ENCODE measurements at regions of chr14 and their contacts with region 1.

Region 1: DNA sequence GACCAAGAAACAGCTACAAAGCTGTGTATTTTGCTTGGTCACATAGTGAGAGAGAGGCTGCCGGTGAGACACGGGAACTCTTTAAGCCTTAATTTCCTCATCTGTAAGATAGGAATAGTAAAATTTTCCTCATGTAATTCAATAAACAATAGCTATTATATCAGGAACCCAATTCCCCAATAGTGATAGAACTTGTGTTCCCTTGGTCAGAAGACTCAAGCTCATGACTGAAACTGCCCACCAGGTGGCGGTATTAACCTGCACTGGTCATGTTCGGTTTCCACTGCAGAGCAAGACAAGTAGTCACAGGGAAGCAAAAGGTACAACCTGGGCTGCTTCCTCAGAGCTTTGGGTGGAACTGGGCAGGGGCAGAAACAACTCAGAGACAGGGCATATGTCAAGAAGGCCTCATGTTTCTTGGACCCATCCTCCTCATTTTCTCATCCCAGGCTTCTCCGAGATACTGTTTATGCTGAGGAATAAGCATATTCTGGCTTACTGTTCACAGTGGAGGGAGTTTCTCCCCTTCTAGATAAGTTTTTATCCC is 4.2 kb upstream of the AJUBA start:
- DNase-seq: peak; percentile 87
- H3K4me3 Mint-ChIP-seq: no peak overlapping the region
- H3K27ac Mint-ChIP-seq: no peak overlapping the region
- H3K4me1 Mint-ChIP-seq: peaks cover 6% of the 10 kb centered on the region
- H3K27me3 Mint-ChIP-seq: no peaks in the 10 kb centered on the region
- CTCF ChIP-seq: peak; percentile 75

Region 2: GRCh38 chr14:22519877-22520685 is 466.5 kb before region 1 on chr14:
- CTCF ChIA-PET with region 1: no interaction called
- POLR2A ChIA-PET with region 1: no interaction called
- intact Hi-C with region 1: no loop called
- DNase-seq: peak; percentile 42
- H3K4me3 Mint-ChIP-seq: no peak overlapping the region
- H3K27ac Mint-ChIP-seq: no peak overlapping the region
- H3K4me1 Mint-ChIP-seq: peaks cover 5% of the 10 kb centered on the region
- H3K27me3 Mint-ChIP-seq: no peaks in the 10 kb centered on the region
- CTCF ChIP-seq: no peak

Region 3: DNA sequence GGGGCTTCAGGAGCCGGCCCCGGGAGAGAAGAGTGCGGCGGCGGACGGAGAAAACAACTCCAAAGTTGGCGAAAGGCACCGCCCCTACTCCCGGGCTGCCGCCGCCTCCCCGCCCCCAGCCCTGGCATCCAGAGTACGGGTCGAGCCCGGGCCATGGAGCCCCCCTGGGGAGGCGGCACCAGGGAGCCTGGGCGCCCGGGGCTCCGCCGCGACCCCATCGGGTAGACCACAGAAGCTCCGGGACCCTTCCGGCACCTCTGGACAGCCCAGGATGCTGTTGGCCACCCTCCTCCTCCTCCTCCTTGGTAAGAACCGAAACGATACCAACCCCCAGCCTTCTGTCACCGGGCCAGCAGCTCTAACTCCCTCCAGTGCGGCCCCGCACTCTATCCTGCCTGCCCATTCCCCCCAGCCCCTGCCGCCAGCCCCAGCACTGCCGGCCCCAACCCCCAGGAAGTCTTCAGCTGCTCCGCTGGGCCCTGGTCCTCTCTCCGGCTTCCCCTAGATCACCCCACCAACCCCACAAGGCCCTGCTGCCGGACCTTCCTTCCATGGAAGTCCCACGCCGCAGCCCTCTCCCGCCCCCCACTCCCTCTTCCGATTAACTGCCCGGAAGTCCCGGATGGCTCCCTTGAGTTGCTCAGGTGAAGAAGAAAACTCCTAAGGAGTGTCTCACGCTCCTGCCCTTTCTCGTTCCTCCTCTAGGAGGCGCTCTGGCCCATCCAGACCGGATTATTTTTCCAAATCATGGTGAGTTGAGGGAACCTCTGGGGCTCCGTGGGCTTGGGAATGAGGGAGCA is 114.3 kb before region 1 on chr14:
- CTCF ChIA-PET with region 1: interaction called, 4 read pairs
- POLR2A ChIA-PET with region 1: interaction called, 9 read pairs
- intact Hi-C with region 1: loop called (anchors 2 kb)
- DNase-seq: peak; percentile 90
- H3K4me3 Mint-ChIP-seq: peak overlapping the region; percentile 79
- H3K27ac Mint-ChIP-seq: peak overlapping the region; percentile 91
- H3K4me1 Mint-ChIP-seq: peaks cover 20% of the 10 kb centered on the region
- H3K27me3 Mint-ChIP-seq: no peaks in the 10 kb centered on the region
- CTCF ChIP-seq: peak; percentile 81

Region 4: GRCh38 chr14:22955702-22956569 is 30.6 kb before region 1 on chr14:
- CTCF ChIA-PET with region 1: interaction called, 331 read pairs
- POLR2A ChIA-PET with region 1: interaction called, 38 read pairs
- intact Hi-C with region 1: no loop called
- DNase-seq: peak; percentile 3
- H3K4me3 Mint-ChIP-seq: peak overlapping the region; percentile 90
- H3K27ac Mint-ChIP-seq: peak overlapping the region; percentile 66
- H3K4me1 Mint-ChIP-seq: peaks cover 9% of the 10 kb centered on the region
- H3K27me3 Mint-ChIP-seq: no peaks in the 10 kb centered on the region
- CTCF ChIP-seq: no peak

Region 5: GRCh38 chr14:23034483-23035302 is 48.1 kb after region 1 on chr14 and contains the start of gene PSMB5:
- CTCF ChIA-PET with region 1: interaction called, 13 read pairs
- POLR2A ChIA-PET with region 1: interaction called, 8 read pairs
- intact Hi-C with region 1: no loop called
- DNase-seq: peak; percentile 96
- H3K4me3 Mint-ChIP-seq: peak within 1 kb of the TSS; percentile 92
- H3K27ac Mint-ChIP-seq: peak within 1 kb of the TSS; percentile 99
- H3K4me1 Mint-ChIP-seq: peaks cover 8% of the 10 kb centered on the region
- H3K27me3 Mint-ChIP-seq: no peaks in the 10 kb centered on the region
- CTCF ChIP-seq: no peak
- total RNA-seq, gene PSMB5: 162 and 173 TPM in 2 replicates

Region 6: DNA sequence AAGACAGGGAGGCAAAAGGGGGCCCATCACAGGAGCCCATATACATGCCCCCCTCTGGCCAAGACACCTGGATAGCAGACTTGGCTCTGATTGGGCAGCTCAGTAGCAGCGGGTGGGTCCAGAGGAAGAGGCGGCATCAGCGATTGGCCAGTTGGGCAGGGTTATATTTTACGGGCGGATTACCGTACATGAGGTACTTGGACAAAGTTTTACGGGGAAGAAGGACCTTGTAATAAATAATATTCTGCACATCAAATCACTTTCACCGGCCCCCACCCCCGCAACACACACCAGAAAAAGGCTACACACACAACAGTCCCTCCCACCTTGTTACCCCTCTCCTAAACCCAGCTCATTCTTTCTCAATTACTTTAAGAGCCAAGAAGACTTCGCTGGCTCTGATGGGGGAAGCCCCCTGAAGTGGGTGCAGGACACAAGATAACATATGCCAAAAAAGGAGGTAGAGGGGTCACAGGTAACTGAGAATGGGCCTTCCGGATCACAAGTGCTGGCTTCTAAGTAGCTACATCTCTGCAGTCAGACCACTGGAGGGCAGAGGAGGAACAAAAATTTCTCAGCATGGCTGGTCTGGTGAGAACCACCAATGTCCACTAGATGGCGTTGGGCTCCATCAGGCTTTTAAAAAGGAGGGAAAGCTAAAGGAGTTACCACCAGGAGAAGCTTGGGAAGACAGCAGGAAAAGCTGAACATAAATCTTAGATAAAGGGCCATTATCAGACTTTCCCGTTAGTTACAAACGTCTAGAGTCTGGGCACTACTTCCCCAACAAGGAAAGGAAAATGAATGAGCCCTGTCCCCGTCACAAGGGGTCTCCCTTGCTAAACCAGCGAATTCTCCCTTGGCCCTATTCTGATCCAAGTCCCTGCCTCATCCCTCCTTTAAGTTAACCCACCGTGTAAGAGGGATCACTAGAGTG is 82.2 kb after region 1 on chr14:
- CTCF ChIA-PET with region 1: interaction called, 620 read pairs
- POLR2A ChIA-PET with region 1: interaction called, 133 read pairs
- intact Hi-C with region 1: no loop called
- DNase-seq: peak; percentile 93
- H3K4me3 Mint-ChIP-seq: peak overlapping the region; percentile 50
- H3K27ac Mint-ChIP-seq: no peak overlapping the region
- H3K4me1 Mint-ChIP-seq: peaks cover 26% of the 10 kb centered on the region
- H3K27me3 Mint-ChIP-seq: no peaks in the 10 kb centered on the region
- CTCF ChIP-seq: peak; percentile 94

Region 7: DNA sequence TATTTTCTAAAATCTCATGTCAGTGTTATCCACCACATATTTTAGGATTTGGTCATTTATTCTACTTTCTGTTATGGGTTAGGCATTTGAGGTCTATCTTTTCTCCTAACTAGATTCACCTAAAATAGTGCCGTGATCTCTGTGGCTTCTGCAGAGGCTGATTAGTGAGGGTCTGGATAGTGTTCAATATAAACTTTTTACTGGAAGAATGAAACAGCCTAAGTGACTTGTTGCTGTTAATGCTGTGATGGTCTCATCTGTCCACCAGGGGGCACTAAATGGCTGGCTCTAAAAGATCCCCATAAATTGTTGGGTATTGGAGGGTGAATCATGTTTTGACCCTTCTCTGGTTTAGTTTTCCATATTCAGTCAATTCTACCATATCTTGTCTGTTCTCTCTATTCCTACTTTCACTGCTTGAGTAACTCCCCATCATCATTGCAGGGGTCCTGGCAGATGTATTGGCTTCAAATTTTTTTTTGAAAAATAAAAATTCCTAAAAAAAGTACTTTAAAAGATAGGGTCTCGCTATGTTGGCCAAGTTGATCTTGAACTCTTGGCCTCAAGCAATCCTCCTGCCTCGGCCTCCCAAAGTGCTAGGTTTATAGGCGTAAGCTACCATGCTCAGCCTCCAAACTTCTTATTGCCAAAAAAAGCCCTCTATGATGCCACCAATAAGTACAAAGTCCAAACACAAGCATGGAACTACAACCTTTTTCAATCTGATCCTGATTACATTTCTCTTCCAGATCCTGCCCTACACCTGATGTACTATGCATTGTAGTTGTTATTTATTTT is 341.6 kb after region 1 on chr14:
- CTCF ChIA-PET with region 1: no interaction called
- POLR2A ChIA-PET with region 1: no interaction called
- intact Hi-C with region 1: no loop called
- DNase-seq: peak; percentile 78
- H3K4me3 Mint-ChIP-seq: no peak overlapping the region
- H3K27ac Mint-ChIP-seq: no peak overlapping the region
- H3K4me1 Mint-ChIP-seq: peaks cover 11% of the 10 kb centered on the region
- H3K27me3 Mint-ChIP-seq: no peaks in the 10 kb centered on the region
- CTCF ChIP-seq: peak; percentile 80